ENCODE measurements at regions of chr15 and their contacts with region 1.

Region 1: GRCh38 chr15:42059661-42060476 is 34.5 kb downstream of the PLA2G4D start:
- DNase-seq: peak; percentile 66
- H3K4me3 Mint-ChIP-seq: no peak overlapping the region
- H3K27ac Mint-ChIP-seq: no peak overlapping the region
- H3K4me1 Mint-ChIP-seq: no peaks in the 10 kb centered on the region
- H3K27me3 Mint-ChIP-seq: no peaks in the 10 kb centered on the region
- CTCF ChIP-seq: peak; percentile 51

Region 2: DNA sequence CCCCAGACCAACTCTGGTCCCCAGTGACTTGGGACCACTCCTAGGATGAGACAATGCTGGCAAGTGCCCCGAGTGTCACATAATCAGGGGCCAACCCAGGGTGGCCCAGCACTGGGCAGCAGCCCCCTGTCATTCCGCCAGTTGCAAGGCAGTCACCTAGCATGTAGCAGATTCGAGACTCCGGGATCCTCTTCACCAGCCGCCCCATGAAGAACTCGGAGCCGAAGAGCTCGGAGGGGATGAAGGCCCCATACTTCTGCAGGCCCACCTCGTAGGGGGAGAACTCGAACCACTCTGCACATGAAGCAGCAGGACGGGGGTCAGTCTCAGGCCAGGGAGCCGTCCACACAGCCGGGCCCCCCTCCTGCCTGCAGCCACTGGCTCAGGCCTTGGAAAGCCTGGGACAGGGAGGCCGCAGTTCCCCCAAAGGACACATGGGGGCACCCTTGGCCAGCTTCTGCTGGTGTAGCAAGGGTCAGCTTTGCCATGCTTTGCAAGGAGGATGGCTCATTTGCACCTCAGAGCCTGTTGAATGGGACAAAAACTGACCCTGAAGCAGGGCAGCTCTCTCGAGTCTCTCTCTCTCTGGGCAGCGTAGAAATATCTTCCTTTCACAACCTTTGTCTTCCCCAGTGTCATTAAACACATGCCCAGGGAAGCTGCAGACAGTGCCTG is 70.5 kb before region 1 on chr15:
- CTCF ChIA-PET with region 1: interaction called, 7 read pairs
- intact Hi-C with region 1: loop called (anchors 1 kb)
- DNase-seq: peak; percentile 88
- H3K4me3 Mint-ChIP-seq: no peak overlapping the region
- H3K27ac Mint-ChIP-seq: no peak overlapping the region
- H3K4me1 Mint-ChIP-seq: no peaks in the 10 kb centered on the region
- H3K27me3 Mint-ChIP-seq: no peaks in the 10 kb centered on the region
- CTCF ChIP-seq: peak; percentile 74

Region 3: DNA sequence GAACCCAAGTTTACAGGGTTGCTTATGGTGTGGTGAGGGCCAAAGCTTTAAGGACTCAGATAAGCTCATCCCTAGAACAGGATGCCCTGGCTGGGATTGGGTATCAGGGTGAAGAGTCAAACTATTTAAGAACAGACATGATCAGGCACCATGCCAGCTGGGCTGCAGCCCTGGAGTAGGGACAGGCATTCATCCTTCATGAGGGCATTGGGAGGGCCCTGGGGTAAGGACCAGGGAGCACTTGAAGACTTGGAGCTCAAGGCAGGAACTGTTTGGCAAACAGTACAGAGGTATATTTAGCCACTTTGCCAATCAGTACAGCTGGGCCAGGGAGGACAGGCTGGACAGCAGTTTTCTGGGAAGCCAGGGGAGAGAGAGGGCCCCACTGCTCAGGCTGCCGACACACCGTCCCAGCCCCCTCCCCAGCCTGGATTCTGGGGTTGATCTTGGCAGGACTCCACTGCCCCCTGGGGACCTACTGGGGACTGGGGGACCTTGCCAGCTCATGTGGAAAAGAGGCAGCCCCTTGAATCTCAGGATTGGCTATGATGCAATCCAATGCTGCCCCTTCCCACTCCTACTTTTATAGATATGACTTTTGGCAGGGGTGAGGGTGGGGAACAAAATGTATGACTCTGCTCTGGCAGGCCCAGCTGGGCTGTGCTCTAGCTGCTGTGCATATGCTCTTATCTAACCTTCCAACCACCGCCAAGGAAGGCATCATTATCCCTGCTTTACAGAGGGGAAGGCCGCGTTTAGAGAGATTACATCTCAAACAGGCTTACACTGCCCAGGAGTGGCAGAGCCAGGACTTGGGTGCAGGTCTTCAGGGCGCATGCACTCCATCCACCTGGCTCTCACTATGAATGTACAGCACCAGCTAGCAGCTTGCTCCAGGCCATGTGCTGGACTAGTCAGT is 41.3 kb before region 1 on chr15:
- CTCF ChIA-PET with region 1: no interaction called
- intact Hi-C with region 1: no loop called
- DNase-seq: no peak
- H3K4me3 Mint-ChIP-seq: no peak overlapping the region
- H3K27ac Mint-ChIP-seq: no peak overlapping the region
- H3K4me1 Mint-ChIP-seq: no peaks in the 10 kb centered on the region
- H3K27me3 Mint-ChIP-seq: peaks cover 27% of the 10 kb centered on the region
- CTCF ChIP-seq: no peak

Measured in Calu3 (cell line).